ENCODE measurements at regions of chr10 and their contacts with region 1.

Region 1: DNA sequence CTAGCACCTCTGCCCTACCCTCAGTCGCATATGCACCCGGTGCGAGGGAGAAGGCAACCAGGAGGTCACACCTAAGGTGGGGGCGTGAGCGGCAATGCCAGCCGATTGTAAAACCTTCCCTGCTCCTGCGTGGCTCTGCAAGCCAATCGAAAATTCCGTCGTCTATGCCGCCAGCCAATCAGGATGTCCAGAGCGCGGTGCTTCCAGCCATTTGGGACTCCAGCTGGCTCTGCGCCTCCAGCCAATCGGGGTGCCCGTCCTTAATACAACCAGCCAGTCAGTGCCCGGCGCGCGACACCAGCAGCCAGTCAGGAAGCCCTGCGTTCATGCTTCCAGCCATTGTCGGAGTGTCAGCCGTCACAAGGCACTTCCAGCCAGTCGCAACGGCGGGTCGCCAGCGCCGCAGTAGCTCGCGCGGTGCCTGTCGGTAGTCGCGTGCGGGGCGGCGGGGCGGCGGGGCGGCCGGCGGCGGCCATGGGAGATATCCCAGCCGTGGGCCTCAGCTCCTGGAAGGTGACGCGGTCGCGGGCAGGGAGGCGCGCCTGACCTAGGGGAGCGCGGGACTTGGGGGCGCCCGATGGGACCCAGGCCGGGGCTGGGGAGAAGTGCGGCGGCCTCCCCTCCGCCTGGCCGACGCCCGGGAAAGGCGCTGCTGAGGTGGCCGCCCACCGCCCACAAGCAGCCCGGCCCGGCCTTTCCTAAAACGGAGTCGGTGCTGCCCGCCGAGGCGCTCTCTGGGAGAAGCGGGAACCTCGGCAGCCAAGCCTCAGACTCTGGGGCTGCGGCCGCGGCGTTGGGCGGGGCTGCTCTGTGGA is at the start of gene AKR1E2:
- DNase-seq: peak; percentile 96
- ATAC-seq: peak; percentile 94
- H3K4me3 ChIP-seq: peak within 1 kb of the TSS; percentile 34 to 44
- H3K27ac ChIP-seq: peak within 1 kb of the TSS; percentile 63 to 76
- H3K4me1 ChIP-seq: no peaks in the 10 kb centered on the region
- H3K27me3 ChIP-seq: no peaks in the 10 kb centered on the region
- total RNA-seq, gene AKR1E2: 11.0 to 20.8 TPM

Region 2: GRCh38 chr10:4885162-4885561 is 59.1 kb after region 1 on chr10:
- intact Hi-C with region 1: no loop called
- DNase-seq: no peak
- ATAC-seq: no peak
- H3K4me3 ChIP-seq: no peak overlapping the region
- H3K27ac ChIP-seq: no peak overlapping the region
- H3K4me1 ChIP-seq: no peaks in the 10 kb centered on the region
- H3K27me3 ChIP-seq: no peaks in the 10 kb centered on the region

Region 3: GRCh38 chr10:5385224-5385623 is 559.2 kb after region 1 on chr10:
- intact Hi-C with region 1: loop called in 1 of 2 experiments (anchors 5 kb)
- DNase-seq: no peak
- ATAC-seq: no peak
- H3K4me3 ChIP-seq: no peak overlapping the region
- H3K27ac ChIP-seq: no peak overlapping the region
- H3K4me1 ChIP-seq: no peaks in the 10 kb centered on the region
- H3K27me3 ChIP-seq: no peaks in the 10 kb centered on the region